Activated T-helper 1 cell treated with anti-CD3 and anti-CD28 coated beads, Interleukin-12 subunit alpha, Interleukin-12 subunit beta, Interleukin-2, Interleukin-4 antibody, amounts not matched to agents 30 ng/mL and 10 ng/mL and 1 ng/mL, durations not matched to agents 14 hours and 24 hours and 36 hours (primary cell): ENCODE measurements at regions of chr13 and their contacts with region 1.

Region 1: GRCh38 chr13:19959831-19960652 is 1.5 kb downstream of the ZMYM2 start:
- DNase-seq: peak; percentile 80
- H3K4me3 Mint-ChIP-seq: peak overlapping the region; percentile 95
- H3K27ac Mint-ChIP-seq: peak overlapping the region; percentile 93
- H3K4me1 Mint-ChIP-seq: peaks cover 25% of the 10 kb centered on the region
- H3K27me3 Mint-ChIP-seq: peaks cover 8% of the 10 kb centered on the region

Region 2: GRCh38 chr13:19633479-19634255 is 326.4 kb before region 1 on chr13 and contains the start of gene MPHOSPH8:
- intact Hi-C with region 1: loop called (anchors 1 kb)
- DNase-seq: peak; percentile 91
- H3K4me3 Mint-ChIP-seq: peak within 1 kb of the TSS; percentile 98
- H3K27ac Mint-ChIP-seq: peak within 1 kb of the TSS; percentile 98
- H3K4me1 Mint-ChIP-seq: peaks cover 26% of the 10 kb centered on the region
- H3K27me3 Mint-ChIP-seq: no peaks in the 10 kb centered on the region
- total RNA-seq, gene MPHOSPH8: 42.9 and 44.3 TPM in 2 replicates

Region 3: GRCh38 chr13:19782049-19782726 is 177.9 kb before region 1 on chr13:
- intact Hi-C with region 1: loop called (anchors 1 kb)
- DNase-seq: peak; percentile 60
- H3K4me3 Mint-ChIP-seq: peak overlapping the region; percentile 97
- H3K27ac Mint-ChIP-seq: peak overlapping the region; percentile 97
- H3K4me1 Mint-ChIP-seq: peaks cover 17% of the 10 kb centered on the region
- H3K27me3 Mint-ChIP-seq: peaks cover 5% of the 10 kb centered on the region

Region 4: DNA sequence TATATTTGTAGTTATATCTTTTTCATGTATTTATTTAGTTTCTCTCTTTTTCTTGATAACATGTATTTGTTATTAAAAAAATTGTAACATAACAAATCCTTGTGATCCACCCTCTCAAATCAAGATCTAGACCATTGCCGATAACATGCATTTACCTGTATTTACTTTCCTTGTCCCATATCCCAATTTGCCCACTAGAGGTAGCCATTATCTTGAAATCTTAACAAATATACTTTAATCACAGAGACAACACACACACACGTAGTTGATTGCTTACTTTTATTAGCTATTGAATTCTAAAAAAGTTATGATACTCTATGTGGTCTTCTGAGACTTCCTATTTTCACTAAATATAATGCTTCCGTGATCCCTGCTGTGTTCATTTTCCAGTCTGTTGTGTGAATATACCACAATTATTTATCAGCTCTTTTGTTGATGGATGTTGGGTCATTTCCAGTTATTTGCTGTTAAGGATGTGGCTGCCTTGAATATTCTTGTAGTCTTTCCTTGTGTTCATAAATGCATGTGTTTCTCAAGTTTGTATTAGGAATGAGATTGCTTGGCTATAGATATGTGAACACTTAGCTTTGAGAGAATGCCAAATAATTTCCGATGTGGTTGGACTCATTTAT is 32.8 kb before region 1 on chr13:
- intact Hi-C with region 1: loop called (anchors 1 kb)
- DNase-seq: no peak
- H3K4me3 Mint-ChIP-seq: no peak overlapping the region
- H3K27ac Mint-ChIP-seq: no peak overlapping the region
- H3K4me1 Mint-ChIP-seq: no peaks in the 10 kb centered on the region
- H3K27me3 Mint-ChIP-seq: no peaks in the 10 kb centered on the region

Region 5: DNA sequence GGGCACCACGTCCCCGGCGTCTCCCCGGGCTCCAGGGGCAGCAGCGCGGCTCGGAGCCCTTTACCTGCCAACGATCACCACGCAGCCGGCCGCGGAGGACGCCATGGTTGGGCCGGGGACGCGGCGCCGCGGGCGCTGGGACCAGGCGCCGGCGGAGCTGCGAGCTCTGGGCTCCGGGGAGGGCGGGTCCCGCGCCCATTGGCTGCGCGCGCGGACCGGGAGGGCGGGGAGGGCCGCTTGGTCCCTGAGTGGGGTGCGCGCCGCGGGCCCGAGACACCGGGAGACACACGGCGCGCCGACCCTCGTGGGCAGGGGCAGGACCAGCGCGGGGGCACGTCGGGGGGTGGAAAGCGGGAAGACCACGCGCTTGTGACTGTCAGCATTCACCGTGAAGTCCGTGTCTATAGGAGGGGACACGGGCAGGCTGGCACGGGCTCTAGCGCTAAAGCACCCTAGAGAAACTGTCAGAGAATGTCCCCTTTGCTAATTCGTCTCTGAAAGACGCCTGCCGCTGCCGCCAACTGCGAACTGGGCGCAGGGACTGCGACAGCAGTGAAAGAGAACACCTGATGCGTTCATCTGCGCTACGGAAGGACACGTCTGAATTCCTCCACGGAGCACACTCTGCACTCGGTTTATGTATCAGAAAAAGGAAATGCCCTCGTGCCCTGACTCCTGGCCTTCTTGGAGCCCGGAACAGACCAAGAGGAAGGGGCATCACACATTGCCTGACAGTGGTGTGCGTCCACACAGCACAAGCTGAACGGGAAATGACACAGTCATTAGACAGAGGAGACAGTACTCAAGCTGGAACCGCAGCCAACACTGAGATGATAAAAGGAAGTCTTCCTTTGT is 565.9 kb after region 1 on chr13 and contains the start of gene CRYL1:
- intact Hi-C with region 1: loop called (anchors 5 kb)
- DNase-seq: peak; percentile 67
- H3K4me3 Mint-ChIP-seq: peak within 1 kb of the TSS; percentile 87
- H3K27ac Mint-ChIP-seq: peak within 1 kb of the TSS; percentile 73
- H3K4me1 Mint-ChIP-seq: peaks cover 38% of the 10 kb centered on the region
- H3K27me3 Mint-ChIP-seq: peaks cover 1% of the 10 kb centered on the region
- total RNA-seq, gene CRYL1: 3.9 and 5.6 TPM in 2 replicates

Region 6: DNA sequence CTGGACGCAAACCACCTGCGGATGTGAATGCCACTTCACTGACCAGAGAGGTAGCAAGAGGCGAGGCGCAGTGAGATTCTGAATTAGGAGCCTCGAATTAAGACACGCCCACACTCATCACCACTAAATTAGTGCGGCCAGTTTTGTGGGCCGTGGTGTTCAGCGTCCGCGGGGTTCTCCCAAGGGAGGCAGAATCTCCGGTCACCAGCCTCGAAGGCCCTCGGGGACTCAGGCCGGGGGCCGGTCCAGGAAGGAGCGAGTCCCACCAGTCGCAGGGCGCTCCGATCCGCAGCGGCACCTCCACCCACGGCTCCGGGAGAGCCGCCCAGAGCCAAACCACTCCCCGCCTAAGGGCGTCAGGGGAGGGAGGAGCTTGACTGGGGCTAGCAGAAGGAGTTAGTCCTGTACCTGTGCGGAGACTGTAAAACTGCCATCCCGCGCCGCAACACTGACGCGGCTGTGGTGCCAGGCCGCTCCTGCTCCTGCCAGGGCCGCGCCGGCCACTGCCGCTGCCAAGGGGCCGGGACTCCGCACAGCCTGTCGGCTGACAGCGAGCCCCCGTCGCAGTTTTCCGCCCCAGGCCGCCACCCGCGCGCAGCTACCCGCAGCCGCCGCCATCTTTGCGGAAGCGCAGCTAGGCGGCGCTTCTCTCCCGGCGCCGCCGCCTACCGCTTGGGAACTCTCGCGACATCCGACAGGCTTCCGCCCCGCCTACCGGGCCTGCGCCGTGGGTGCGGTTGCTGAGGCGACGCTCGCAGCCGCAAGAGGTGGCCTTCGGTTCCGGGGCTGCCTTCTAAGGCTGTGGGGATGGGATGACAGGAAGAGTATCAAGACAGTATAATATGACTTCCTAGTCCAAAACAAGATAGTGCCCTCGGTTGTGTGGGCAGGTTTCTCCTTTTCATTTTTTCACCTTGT is 1643.7 kb after region 1 on chr13 and contains the start of gene MICU2:
- intact Hi-C with region 1: loop called (anchors 2 kb)
- DNase-seq: peak; percentile 94
- H3K4me3 Mint-ChIP-seq: peak within 1 kb of the TSS; percentile 85
- H3K27ac Mint-ChIP-seq: peak within 1 kb of the TSS; percentile 88
- H3K4me1 Mint-ChIP-seq: peaks cover 24% of the 10 kb centered on the region
- H3K27me3 Mint-ChIP-seq: peaks cover 24% of the 10 kb centered on the region
- total RNA-seq, gene MICU2: 32.5 and 33.8 TPM in 2 replicates